ENCODE measurements at regions of chr1 and their contacts with region 1.

Region 1: DNA sequence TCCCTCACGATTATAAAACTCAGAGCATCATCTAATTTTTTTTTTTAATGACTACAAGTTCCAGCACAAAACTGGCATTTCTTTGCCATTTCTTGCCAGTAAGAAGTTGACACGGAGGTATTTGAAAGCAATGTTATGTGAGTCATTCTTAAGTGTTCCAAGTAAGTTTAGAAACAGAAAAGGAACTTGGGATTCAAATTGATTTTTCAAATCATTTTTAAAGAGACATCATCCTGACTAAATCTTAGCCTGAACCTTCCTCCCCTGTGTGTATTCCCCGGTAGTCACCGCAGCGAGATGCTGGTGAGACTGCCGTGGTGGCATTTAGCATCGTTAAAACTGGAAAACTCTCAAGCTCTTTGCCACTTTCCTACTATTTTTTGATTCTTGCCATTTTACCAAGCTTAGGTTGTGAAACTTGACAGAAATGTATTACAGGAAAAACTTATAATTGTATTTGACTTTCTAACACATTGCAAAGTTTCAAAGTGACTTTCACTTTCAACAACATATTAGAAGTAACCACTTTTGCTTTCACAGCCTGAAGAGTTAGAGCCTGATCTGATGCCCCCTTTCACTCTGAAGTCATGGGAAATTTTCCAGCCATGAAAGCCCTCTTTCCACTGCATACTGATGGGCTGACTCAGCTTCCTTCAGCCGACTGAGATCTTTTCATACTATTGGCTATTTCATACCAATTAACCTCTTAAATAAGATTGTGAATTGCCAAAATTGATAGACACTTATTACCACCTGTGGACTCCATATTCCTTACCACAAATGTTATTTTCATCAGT is 61.4 kb downstream of the OLFML2B start:
- H3K4me3 ChIP-seq: no peak overlapping the region
- H3K27ac ChIP-seq: no peak overlapping the region
- H3K4me1 ChIP-seq: no peaks in the 10 kb centered on the region; the same call in 1 of the 2 replicates
- CTCF ChIP-seq: no peak

Region 2: GRCh38 chr1:161801955-161802354 is 160.3 kb before region 1 on chr1:
- CTCF ChIA-PET with region 1: no interaction called
- POLR2A ChIA-PET with region 1: interaction called, 10 read pairs
- H3K4me3 ChIP-seq: no peak overlapping the region
- H3K27ac ChIP-seq: no peak overlapping the region
- H3K4me1 ChIP-seq: no peaks in the 10 kb centered on the region
- CTCF ChIP-seq: no peak

Measured in HEK293 (cell line).